ENCODE measurements at regions of chr7 and their contacts with region 1.

Region 1: GRCh38 chr7:2530071-2530967 is 10.7 kb downstream of the LFNG start:
- DNase-seq: no peak
- ATAC-seq: 0 out of 2 replicates have a peak, but pooled peaks have one; percentile 1
- H3K4me3 ChIP-seq: no peak overlapping the region
- H3K27ac ChIP-seq: peak overlapping the region; percentile 85
- H3K4me1 ChIP-seq: peaks cover 58% of the 10 kb centered on the region
- H3K27me3 ChIP-seq: no peaks in the 10 kb centered on the region
- CTCF ChIP-seq: no peak

Region 2: GRCh38 chr7:2131341-2131740 is 399.0 kb before region 1 on chr7:
- CTCF ChIA-PET with region 1: no interaction called
- POLR2A ChIA-PET with region 1: interaction called, 18 read pairs
- in situ Hi-C with region 1: no loop called
- intact Hi-C with region 1: no loop called
- DNase-seq: no peak
- ATAC-seq: no peak
- H3K4me3 ChIP-seq: no peak overlapping the region
- H3K27ac ChIP-seq: no peak overlapping the region
- H3K4me1 ChIP-seq: no peaks in the 10 kb centered on the region
- H3K27me3 ChIP-seq: no peaks in the 10 kb centered on the region
- CTCF ChIP-seq: no peak

Region 3: GRCh38 chr7:2157468-2158279 is 372.6 kb before region 1 on chr7:
- CTCF ChIA-PET with region 1: no interaction called
- POLR2A ChIA-PET with region 1: no interaction called
- in situ Hi-C with region 1: no loop called
- intact Hi-C with region 1: no loop called
- DNase-seq: peak; percentile 32
- ATAC-seq: peak; percentile 90
- H3K4me3 ChIP-seq: no peak overlapping the region
- H3K27ac ChIP-seq: 0 out of 2 replicates have a peak overlapping the region, but pooled peaks have one; percentile 19
- H3K4me1 ChIP-seq: peaks cover 27% of the 10 kb centered on the region
- H3K27me3 ChIP-seq: no peaks in the 10 kb centered on the region
- CTCF ChIP-seq: no peak

Region 4: DNA sequence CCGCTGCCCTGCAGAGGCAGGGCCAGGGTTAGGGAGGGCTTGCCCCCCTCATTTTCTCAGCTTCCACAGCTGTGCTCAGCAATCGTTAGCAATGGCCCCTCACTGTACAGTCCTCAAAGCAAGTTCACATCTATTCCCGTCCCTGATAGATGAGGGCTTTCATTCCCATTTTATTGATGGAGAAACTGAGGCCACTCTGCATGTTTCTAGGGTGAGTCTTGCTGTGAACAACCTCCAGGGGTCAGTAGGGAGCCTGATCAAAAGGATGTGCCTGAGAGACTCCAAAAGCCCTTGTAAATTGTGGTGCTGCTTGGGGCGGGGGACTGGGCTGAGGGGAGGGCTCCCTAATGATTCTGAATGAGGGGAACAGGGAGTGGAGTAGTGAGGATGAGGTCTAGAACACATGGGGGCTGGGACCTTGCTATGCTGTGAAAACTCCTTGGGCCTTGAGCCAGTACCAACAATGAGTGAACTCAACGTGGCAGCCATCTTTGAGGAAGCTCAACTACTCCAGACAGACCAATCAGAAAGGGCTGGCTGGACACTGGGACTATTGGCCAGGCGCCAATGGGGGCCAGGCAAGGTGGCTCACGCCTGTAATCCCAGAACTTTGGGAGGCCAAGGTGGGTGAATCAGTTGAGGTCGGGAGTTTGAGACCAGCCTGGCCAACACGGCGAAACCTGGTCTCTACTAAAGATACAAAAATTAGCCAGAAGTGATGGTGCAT is 47.4 kb before region 1 on chr7:
- CTCF ChIA-PET with region 1: interaction called, 14 read pairs
- POLR2A ChIA-PET with region 1: no interaction called
- in situ Hi-C with region 1: no loop called
- intact Hi-C with region 1: no loop called
- DNase-seq: no peak
- ATAC-seq: no peak
- H3K4me3 ChIP-seq: no peak overlapping the region
- H3K27ac ChIP-seq: no peak overlapping the region
- H3K4me1 ChIP-seq: peaks cover 12% of the 10 kb centered on the region
- H3K27me3 ChIP-seq: no peaks in the 10 kb centered on the region
- CTCF ChIP-seq: no peak

Measured in Panc1 (cell line).